H1 (cell line): ENCODE measurements at regions of chr9 and their contacts with region 1.

Region 1: DNA sequence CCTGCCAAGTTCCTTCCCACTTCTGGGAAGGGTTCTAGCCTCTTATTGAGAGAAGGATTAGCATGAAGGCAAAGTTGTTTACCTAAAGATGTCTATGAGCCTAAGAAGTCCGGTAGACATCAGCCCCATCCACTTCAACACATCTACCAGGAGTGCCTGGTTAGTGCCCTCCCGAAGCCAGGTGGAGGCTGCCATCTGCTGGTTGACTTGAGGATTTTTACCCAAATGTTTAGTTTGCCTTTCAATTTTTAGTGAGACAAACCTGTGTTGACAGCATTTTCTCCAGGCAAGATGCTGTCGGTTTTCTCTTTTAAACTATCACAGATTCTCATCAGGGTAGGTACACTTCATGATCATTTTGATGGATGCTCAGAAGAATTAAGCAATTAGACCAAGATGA is 83.6 kb upstream of the TNFSF8 start:
- DNase-seq: peak; percentile 27 to 75
- H3K4me3 ChIP-seq: no peak overlapping the region
- H3K27ac ChIP-seq: no peak overlapping the region
- H3K4me1 ChIP-seq: no peaks in the 10 kb centered on the region
- H3K27me3 ChIP-seq: no peaks in the 10 kb centered on the region; a peak in 1 of 7 replicates
- CTCF ChIP-seq: peak; percentile 66 to 90 (median 80)
- EP300 ChIP-seq: no peak
- POLR2A ChIP-seq: no peak
- RAD21 ChIP-seq: peak; percentile 97 to 98

Region 2: DNA sequence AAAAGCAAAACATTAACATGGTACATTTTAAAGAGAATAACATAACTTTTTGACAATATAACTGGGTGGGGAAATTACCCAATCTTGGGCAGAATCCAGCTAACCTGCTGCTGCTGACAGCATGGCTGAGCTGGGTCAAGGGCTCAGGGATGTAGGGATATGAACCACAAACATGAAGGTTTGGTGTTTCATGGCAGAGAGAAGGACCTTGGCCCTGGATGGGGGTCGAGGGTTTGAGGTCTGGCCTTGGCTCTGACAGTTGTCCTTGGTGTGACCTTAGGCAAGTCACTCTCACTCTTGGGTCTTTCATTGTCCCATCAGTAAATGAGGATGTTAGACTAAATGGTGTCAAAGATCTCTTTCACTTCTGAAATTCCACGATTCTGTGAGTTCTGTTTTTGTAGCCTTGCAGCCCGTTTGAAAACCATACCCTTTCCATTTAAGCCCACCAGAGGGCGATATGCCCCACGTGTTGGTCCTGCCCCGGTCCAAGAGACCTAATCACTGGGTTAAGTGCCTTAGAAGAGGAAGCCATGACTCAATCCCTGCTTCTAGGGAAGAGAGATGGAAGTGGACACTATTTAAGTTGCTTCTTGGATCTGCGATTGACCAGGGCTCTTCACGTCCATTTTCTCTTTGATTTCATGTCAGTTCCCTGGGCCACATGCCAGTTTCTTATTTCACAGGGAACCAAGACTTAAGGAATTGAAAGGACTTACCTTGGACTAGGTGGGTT is 275.2 kb before region 1 on chr9:
- CTCF ChIA-PET with region 1: interaction called, 37 read pairs
- POLR2A ChIA-PET with region 1: no interaction called
- DNase-seq: peak; percentile 46 to 78
- H3K4me3 ChIP-seq: no peak overlapping the region
- H3K27ac ChIP-seq: no peak overlapping the region
- H3K4me1 ChIP-seq: no peaks in the 10 kb centered on the region
- H3K27me3 ChIP-seq: no peaks in the 10 kb centered on the region
- CTCF ChIP-seq: peak; percentile 62 to 92 (median 87)
- EP300 ChIP-seq: no peak
- POLR2A ChIP-seq: no peak
- RAD21 ChIP-seq: peak; percentile 98 to 99

Region 3: GRCh38 chr9:114919611-114920010 is 94.4 kb before region 1 on chr9:
- CTCF ChIA-PET with region 1: interaction called, 234 read pairs
- POLR2A ChIA-PET with region 1: no interaction called
- DNase-seq: no peak
- H3K4me3 ChIP-seq: no peak overlapping the region
- H3K27ac ChIP-seq: no peak overlapping the region
- H3K4me1 ChIP-seq: peaks cover 0 to 2% (median 0%) of the 10 kb centered on the region in 4 experiments; a peak in 2 of 7 replicates
- H3K27me3 ChIP-seq: peaks cover 39 to 73% (median 60%) of the 10 kb centered on the region in 4 experiments
- CTCF ChIP-seq: no peak
- EP300 ChIP-seq: no peak
- POLR2A ChIP-seq: no peak
- RAD21 ChIP-seq: no peak

Region 4: GRCh38 chr9:114994768-114995167 is 19.2 kb before region 1 on chr9:
- CTCF ChIA-PET with region 1: interaction called, 14 read pairs
- POLR2A ChIA-PET with region 1: no interaction called
- DNase-seq: no peak
- H3K4me3 ChIP-seq: no peak overlapping the region
- H3K27ac ChIP-seq: no peak overlapping the region
- H3K4me1 ChIP-seq: no peaks in the 10 kb centered on the region; a peak in 1 of 7 replicates
- H3K27me3 ChIP-seq: 0 out of 7 replicates have a peak, but pooled peaks cover 0 to 2% (median 0%) of the 10 kb centered on the region in 4 experiments
- CTCF ChIP-seq: no peak
- EP300 ChIP-seq: no peak
- POLR2A ChIP-seq: no peak
- RAD21 ChIP-seq: no peak

Region 5: GRCh38 chr9:115099901-115100300 is 85.9 kb after region 1 on chr9:
- CTCF ChIA-PET with region 1: no interaction called
- POLR2A ChIA-PET with region 1: no interaction called
- DNase-seq: no peak
- H3K4me3 ChIP-seq: no peak overlapping the region
- H3K27ac ChIP-seq: no peak overlapping the region
- H3K4me1 ChIP-seq: no peaks in the 10 kb centered on the region
- H3K27me3 ChIP-seq: peaks cover 0 to 3% (median 0%) of the 10 kb centered on the region in 4 experiments; a peak in 1 of 7 replicates
- CTCF ChIP-seq: no peak
- EP300 ChIP-seq: no peak
- POLR2A ChIP-seq: no peak
- RAD21 ChIP-seq: no peak